Heart right ventricle (tissue), 16 donors: ENCODE measurements at regions of chr12 and their contacts with region 1.

Region 1: DNA sequence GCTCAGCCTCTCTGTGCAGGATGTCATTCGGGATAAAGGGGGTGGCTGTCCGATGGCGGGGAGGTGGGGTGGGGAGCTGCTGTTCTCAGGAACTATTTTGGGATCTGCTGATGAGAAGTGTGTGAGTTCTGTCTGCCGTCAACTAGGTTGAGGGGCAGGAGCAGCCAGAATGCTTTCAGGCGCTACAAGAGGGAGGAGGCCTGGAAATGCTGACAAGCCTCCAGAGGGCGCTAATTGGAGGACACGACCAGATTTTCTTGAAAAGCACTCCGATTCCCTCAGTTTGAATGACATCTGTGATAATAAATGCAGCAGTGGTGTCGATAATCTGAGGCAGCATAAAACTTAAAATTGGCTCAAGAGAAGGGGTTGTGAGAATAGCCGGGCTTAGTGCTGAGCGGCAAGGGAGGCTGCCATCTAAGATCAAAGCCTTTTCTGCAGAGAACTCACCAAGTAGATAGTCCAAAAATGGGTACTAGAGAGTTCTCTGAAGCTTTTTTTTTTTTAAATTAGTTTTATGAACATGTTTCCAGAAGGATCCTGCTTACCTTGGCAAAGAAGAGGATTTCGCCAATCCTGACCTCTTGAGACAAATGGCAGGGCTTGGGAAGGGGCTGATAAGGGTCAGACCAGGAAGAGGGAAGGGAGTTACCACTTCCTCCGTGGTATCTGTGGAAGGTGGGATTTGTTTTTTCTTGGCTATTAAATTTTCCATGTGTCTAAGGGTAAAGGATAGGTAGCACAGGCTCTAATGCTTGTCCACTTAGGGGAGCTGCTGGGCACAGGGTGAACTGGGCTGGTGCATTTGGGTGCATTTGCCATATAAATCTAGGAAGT is 94.4 kb downstream of the CRACR2A start:
- DNase-seq: peak; percentile 27 to 35
- ATAC-seq: peak; percentile 45 to 63 (median 51)
- H3K4me3 ChIP-seq: no peak overlapping the region
- H3K27ac ChIP-seq: no peak overlapping the region
- H3K4me1 ChIP-seq: peaks cover 0 to 24% (median 13%) of the 10 kb centered on the region in 9 donors
- H3K27me3 ChIP-seq: no peaks in the 10 kb centered on the region
- CTCF ChIP-seq: peak; percentile 20 to 64 (median 47)

Region 2: GRCh38 chr12:3313675-3314663 is 344.6 kb before region 1 on chr12:
- intact Hi-C with region 1: loop called in 1 of 10 experiments (anchors 10 kb)
- DNase-seq: no peak
- ATAC-seq: peak; percentile 3 to 48 (median 18)
- H3K4me3 ChIP-seq: no peak overlapping the region
- H3K27ac ChIP-seq: peak overlapping the region in 3 of 10 donors; percentile 33 to 68 (median 51)
- H3K4me1 ChIP-seq: peaks cover 10 to 45% (median 26%) of the 10 kb centered on the region in 9 donors
- H3K27me3 ChIP-seq: no peaks in the 10 kb centered on the region
- CTCF ChIP-seq: peak in 8 of 9 donors; percentile 9 to 48 (median 42)

Region 3: DNA sequence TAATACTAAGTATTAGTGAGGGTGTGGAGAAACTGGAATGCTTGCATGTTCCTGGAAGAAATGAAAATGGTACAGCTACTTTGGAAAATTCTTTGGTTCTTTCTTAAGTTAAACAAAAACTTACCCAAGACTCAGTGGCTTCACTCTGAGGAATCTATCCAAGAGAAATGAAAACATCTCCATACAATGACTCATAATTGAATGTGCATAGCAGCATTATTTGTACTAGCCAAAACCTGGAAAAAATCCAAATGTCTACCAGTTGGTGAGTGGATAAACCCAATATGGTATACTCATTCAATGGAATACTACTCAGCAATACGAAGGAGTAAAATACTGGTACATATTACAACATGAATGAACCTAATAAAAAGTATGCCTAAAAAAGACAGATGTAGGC is 112.3 kb after region 1 on chr12:
- intact Hi-C with region 1: loop called in 9 of 10 experiments (anchors 5 to 10 kb)
- DNase-seq: no peak
- ATAC-seq: no peak
- H3K4me3 ChIP-seq: no peak overlapping the region
- H3K27ac ChIP-seq: no peak overlapping the region
- H3K4me1 ChIP-seq: peaks cover 0 to 24% (median 6%) of the 10 kb centered on the region in 9 donors
- H3K27me3 ChIP-seq: no peaks in the 10 kb centered on the region
- CTCF ChIP-seq: no peak

Region 4: GRCh38 chr12:4056910-4057845 is 398.6 kb after region 1 on chr12:
- intact Hi-C with region 1: no loop called
- DNase-seq: no peak
- ATAC-seq: no peak
- H3K4me3 ChIP-seq: no peak overlapping the region
- H3K27ac ChIP-seq: no peak overlapping the region
- H3K4me1 ChIP-seq: no peaks in the 10 kb centered on the region
- H3K27me3 ChIP-seq: peaks cover 0 to 63% (median 22%) of the 10 kb centered on the region in 7 donors
- CTCF ChIP-seq: no peak